ENCODE measurements at regions of chr2 and their contacts with region 1.

Region 1: GRCh38 chr2:143259368-143259958 is 130.2 kb downstream of the ARHGAP15 start:
- DNase-seq: no peak
- ATAC-seq: peak; percentile 29
- H3K4me3 Mint-ChIP-seq: no peak overlapping the region
- H3K27ac Mint-ChIP-seq: peak overlapping the region; percentile 81
- H3K4me1 Mint-ChIP-seq: peaks cover 70% of the 10 kb centered on the region
- H3K27me3 Mint-ChIP-seq: no peaks in the 10 kb centered on the region
- CTCF ChIP-seq: no peak

Region 2: GRCh38 chr2:142218471-142218870 is 1041.0 kb before region 1 on chr2:
- CTCF ChIA-PET with region 1: no interaction called
- POLR2A ChIA-PET with region 1: no interaction called
- intact Hi-C with region 1: no loop called
- DNase-seq: no peak
- ATAC-seq: no peak
- H3K4me3 Mint-ChIP-seq: no peak overlapping the region
- H3K27ac Mint-ChIP-seq: no peak overlapping the region
- H3K4me1 Mint-ChIP-seq: no peaks in the 10 kb centered on the region
- H3K27me3 Mint-ChIP-seq: no peaks in the 10 kb centered on the region
- CTCF ChIP-seq: no peak

Region 3: GRCh38 chr2:142796161-142796560 is 463.3 kb before region 1 on chr2:
- CTCF ChIA-PET with region 1: no interaction called
- POLR2A ChIA-PET with region 1: interaction called, 12 read pairs
- intact Hi-C with region 1: no loop called
- DNase-seq: no peak
- ATAC-seq: no peak
- H3K4me3 Mint-ChIP-seq: no peak overlapping the region
- H3K27ac Mint-ChIP-seq: no peak overlapping the region
- H3K4me1 Mint-ChIP-seq: peaks cover 6% of the 10 kb centered on the region
- H3K27me3 Mint-ChIP-seq: no peaks in the 10 kb centered on the region
- CTCF ChIP-seq: no peak

Region 4: DNA sequence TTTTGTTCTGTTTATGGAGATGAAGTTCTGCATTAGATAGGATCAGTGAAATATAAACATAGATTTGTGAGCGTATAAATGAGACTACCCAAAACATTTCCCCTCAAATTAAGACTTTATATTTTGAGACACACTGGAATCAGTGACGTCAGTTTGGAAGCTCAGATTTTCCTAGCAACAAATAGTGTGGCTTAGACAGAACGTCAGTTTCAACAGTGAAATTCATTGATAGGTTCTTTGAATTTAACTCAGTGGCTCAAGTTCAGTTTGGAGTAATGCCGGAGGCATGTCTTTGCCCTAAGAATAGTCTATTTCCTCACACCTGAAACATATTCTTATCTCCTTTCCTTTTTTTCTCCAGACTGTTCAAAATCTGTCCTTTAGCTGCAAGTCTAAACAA is 243.8 kb before region 1 on chr2:
- CTCF ChIA-PET with region 1: no interaction called
- POLR2A ChIA-PET with region 1: no interaction called
- intact Hi-C with region 1: no loop called
- DNase-seq: no peak
- ATAC-seq: no peak
- H3K4me3 Mint-ChIP-seq: no peak overlapping the region
- H3K27ac Mint-ChIP-seq: peak overlapping the region; percentile 57
- H3K4me1 Mint-ChIP-seq: peaks cover 16% of the 10 kb centered on the region
- H3K27me3 Mint-ChIP-seq: no peaks in the 10 kb centered on the region
- CTCF ChIP-seq: no peak

Region 5: DNA sequence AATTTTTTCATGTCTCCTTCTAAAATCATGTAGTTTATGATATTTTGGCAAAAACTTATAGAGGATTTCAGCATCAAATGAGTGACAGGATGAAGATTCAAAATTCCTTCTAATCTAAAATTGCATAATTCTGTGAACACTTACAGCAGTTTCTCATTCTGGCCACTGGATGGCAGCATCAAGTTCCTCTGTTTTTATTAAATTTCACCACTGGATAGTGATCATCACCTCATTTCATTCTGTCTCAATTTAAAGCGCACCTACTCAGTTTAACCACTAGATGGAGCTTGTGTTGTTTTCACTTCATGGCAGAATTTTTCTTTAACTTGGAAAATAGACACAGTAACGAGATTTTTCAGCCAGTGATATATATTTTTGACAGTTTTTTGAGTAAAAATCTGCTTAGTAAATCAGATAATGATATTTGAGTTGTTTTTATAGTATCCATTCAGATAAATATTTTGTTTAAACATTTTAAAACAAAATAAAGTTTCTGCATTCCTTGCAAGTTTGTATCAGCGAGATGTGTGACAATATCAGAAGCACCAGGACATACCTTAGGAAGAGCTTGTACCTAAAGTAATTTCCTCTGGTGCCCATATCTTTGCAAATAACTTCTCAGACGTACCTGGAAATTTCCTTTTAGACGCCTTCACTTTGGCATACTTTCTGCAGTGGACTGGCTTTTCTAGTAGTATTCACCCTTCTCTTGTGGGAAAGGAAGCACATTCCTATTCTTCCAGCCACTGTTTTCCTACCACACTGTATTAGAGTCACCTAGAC is 225.0 kb before region 1 on chr2:
- CTCF ChIA-PET with region 1: interaction called, 15 read pairs
- POLR2A ChIA-PET with region 1: no interaction called
- intact Hi-C with region 1: loop called (anchors 1 kb)
- DNase-seq: no peak
- ATAC-seq: peak; percentile 99
- H3K4me3 Mint-ChIP-seq: no peak overlapping the region
- H3K27ac Mint-ChIP-seq: no peak overlapping the region
- H3K4me1 Mint-ChIP-seq: peaks cover 9% of the 10 kb centered on the region
- H3K27me3 Mint-ChIP-seq: no peaks in the 10 kb centered on the region
- CTCF ChIP-seq: peak; percentile 79

Region 6: DNA sequence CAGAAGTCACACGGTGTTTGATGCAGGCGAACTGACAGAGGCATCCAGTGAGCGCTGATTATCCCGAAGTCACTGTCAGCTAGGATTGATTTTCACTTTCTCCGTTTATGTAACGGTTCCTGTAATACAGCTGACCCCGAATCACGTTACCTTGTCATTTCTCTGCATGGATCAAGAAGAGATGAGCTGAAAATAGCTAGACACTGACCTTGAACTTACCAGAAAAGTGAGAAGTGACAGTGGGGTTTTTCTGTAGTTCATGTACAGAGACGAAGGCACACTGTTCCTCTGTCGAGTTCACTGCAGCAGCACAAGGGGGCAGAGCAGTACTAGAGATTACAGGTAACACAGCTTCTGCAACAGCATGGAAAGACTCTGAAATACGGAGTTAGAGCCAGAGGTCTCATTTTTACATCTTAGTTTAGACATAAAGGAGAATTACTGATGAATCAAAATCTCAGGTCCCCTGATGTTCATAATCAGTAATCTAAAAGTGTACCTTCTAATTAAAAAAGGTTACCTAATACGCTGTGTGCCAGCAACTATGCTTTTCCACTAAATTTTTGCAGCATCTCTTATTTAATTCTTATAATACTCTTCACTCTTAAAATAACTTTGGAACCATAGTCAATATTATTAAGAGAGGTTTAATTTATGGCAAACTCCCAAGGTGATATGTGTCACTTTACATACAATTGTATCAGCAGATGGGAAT is 97.2 kb before region 1 on chr2:
- CTCF ChIA-PET with region 1: interaction called, 115 read pairs
- POLR2A ChIA-PET with region 1: interaction called, 3 read pairs
- intact Hi-C with region 1: loop called (anchors 1 kb)
- DNase-seq: no peak
- ATAC-seq: peak; percentile 95
- H3K4me3 Mint-ChIP-seq: no peak overlapping the region
- H3K27ac Mint-ChIP-seq: peak overlapping the region; percentile 37
- H3K4me1 Mint-ChIP-seq: peaks cover 76% of the 10 kb centered on the region
- H3K27me3 Mint-ChIP-seq: no peaks in the 10 kb centered on the region
- CTCF ChIP-seq: no peak

Region 7: GRCh38 chr2:143217512-143218115 is 41.8 kb before region 1 on chr2:
- CTCF ChIA-PET with region 1: interaction called, 25 read pairs
- POLR2A ChIA-PET with region 1: interaction called, 3 read pairs
- intact Hi-C with region 1: loop called (anchors 1 kb)
- DNase-seq: no peak
- ATAC-seq: no peak
- H3K4me3 Mint-ChIP-seq: no peak overlapping the region
- H3K27ac Mint-ChIP-seq: peak overlapping the region; percentile 38
- H3K4me1 Mint-ChIP-seq: peaks cover 16% of the 10 kb centered on the region
- H3K27me3 Mint-ChIP-seq: no peaks in the 10 kb centered on the region
- CTCF ChIP-seq: no peak

Region 8: GRCh38 chr2:143284087-143284675 is 24.7 kb after region 1 on chr2:
- CTCF ChIA-PET with region 1: interaction called, 16 read pairs
- POLR2A ChIA-PET with region 1: no interaction called
- intact Hi-C with region 1: loop called (anchors 2 kb)
- DNase-seq: no peak
- ATAC-seq: peak; percentile 88
- H3K4me3 Mint-ChIP-seq: no peak overlapping the region
- H3K27ac Mint-ChIP-seq: no peak overlapping the region
- H3K4me1 Mint-ChIP-seq: peaks cover 11% of the 10 kb centered on the region
- H3K27me3 Mint-ChIP-seq: no peaks in the 10 kb centered on the region
- CTCF ChIP-seq: peak; percentile 72

Region 9: GRCh38 chr2:143451642-143452281 is 192.3 kb after region 1 on chr2:
- CTCF ChIA-PET with region 1: no interaction called
- POLR2A ChIA-PET with region 1: interaction called, 14 read pairs
- intact Hi-C with region 1: no loop called
- DNase-seq: no peak
- ATAC-seq: no peak
- H3K4me3 Mint-ChIP-seq: no peak overlapping the region
- H3K27ac Mint-ChIP-seq: no peak overlapping the region
- H3K4me1 Mint-ChIP-seq: peaks cover 10% of the 10 kb centered on the region
- H3K27me3 Mint-ChIP-seq: no peaks in the 10 kb centered on the region
- CTCF ChIP-seq: no peak

Measured in activated B cell treated with CpG ODN at 0.5 μM for 24 hours (primary cell).